Activated naive CD4-positive, alpha-beta T cell treated with anti-CD3 and anti-CD28 coated beads for 36 hours (primary cell): ENCODE measurements at regions of chr12 and their contacts with region 1.

Region 1: GRCh38 chr12:13864081-13864673 is 117.2 kb downstream of the GRIN2B start:
- DNase-seq: peak; percentile 75
- H3K4me3 Mint-ChIP-seq: no peak overlapping the region
- H3K27ac Mint-ChIP-seq: no peak overlapping the region
- H3K4me1 Mint-ChIP-seq: no peaks in the 10 kb centered on the region
- H3K27me3 Mint-ChIP-seq: peaks cover 20% of the 10 kb centered on the region

Region 2: DNA sequence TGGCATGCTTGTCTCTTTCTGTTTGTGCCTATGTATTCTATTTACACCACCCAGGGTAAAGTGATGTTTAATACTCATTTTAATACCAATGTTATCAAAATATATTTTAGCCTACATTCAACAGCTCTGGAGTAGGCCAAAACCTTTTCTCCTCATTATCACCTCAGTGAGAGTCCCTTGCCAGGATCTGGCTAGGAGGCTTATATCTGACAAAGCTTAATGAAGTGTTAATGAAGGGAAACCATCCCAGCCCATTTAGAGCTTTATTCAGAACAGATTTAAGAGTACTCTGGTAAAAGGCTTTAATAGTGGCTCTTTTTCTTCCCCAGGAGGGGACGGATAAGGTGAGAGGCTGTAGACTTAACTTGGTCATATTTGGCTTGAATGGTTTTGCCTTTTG is 20.3 kb before region 1 on chr12:
- CTCF ChIA-PET with region 1: interaction called, 10 read pairs
- intact Hi-C with region 1: no loop called
- DNase-seq: no peak
- H3K4me3 Mint-ChIP-seq: no peak overlapping the region
- H3K27ac Mint-ChIP-seq: no peak overlapping the region
- H3K4me1 Mint-ChIP-seq: no peaks in the 10 kb centered on the region
- H3K27me3 Mint-ChIP-seq: peaks cover 3% of the 10 kb centered on the region

Region 3: DNA sequence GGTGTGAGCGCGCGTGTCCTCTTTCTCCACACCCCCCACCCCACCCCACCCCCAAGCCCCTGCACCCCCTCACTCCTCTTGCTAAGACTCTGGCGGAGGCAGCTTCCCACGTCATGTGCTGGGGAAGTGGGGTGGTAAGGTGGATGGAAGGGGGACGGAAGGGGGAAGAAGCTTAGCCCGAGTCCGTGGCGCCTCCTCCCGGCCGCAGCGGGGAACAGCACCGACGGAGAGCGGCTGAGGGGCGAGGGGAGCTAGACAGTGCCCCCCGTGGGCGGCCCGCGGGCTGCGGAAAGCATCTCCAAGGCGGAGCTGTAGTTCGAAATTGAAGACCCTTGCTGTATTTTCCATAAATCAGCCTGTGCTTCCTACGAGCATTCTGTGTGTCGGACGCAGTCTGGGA is 117.8 kb after region 1 on chr12:
- CTCF ChIA-PET with region 1: no interaction called
- intact Hi-C with region 1: loop called (anchors 2 kb)
- DNase-seq: peak; percentile 19
- H3K4me3 Mint-ChIP-seq: no peak overlapping the region
- H3K27ac Mint-ChIP-seq: no peak overlapping the region
- H3K4me1 Mint-ChIP-seq: peaks cover 16% of the 10 kb centered on the region
- H3K27me3 Mint-ChIP-seq: peaks cover 66% of the 10 kb centered on the region

Region 4: DNA sequence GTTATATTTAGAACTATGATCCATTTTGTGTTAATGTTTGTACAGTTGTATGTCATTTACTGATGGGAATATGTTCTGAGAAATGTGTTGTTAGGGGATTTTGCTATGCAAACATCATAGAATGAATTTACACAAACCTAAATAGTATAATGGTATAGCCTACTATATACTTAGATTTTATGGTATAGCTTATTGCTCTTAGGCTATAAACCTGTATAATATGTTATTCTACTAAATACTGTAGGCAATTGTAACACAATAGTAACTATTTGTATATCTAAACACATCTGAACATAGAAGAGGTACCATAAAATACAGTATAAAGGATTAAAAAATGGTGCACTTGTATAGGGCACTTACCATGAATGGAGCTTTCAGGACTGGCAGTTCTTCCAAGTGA is 222.7 kb after region 1 on chr12:
- CTCF ChIA-PET with region 1: no interaction called
- intact Hi-C with region 1: no loop called
- DNase-seq: no peak
- H3K4me3 Mint-ChIP-seq: no peak overlapping the region
- H3K27ac Mint-ChIP-seq: no peak overlapping the region
- H3K4me1 Mint-ChIP-seq: no peaks in the 10 kb centered on the region
- H3K27me3 Mint-ChIP-seq: no peaks in the 10 kb centered on the region